Activated naive CD4-positive, alpha-beta T cell treated with anti-CD3 and anti-CD28 coated beads for 36 hours (primary cell): ENCODE measurements at regions of chr16 and their contacts with region 1.

Region 1: DNA sequence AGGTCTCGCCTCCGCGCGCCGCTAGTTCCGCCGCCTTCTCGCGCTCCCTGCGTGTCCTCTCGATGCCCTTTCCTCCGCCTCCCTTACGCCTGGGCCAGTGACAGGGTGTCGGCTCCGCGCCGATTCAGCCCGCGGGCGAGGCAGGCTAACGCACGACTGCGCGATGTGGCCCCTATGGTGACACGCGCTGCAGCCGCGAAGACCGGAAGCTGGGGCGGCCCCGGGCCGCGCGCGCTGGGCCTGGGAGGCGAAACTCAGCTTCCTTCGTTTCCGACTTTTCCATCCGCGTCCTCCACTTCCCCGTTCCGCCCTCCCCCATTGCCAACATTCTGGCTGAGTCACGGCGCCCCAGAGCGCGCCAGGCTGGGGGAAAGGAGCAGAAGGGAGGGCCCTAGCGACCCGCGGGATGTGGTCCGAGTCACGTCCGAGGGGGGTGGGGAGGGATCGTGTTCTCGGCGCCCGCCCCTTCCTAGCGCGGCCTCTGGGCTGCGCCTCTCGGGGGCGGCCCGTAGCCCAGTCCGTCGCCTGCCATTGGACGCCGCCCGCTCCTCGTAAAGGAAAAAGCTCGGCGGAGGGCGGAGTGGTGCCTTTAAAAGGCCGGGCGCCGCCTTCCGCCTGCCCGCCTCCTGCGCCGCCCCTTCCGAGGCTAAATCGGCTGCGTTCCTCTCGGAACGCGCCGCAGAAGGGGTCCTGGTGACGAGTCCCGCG is at the start of gene ALDOA:
- DNase-seq: peak; percentile 97
- H3K4me3 Mint-ChIP-seq: peak within 1 kb of the TSS; percentile 95
- H3K27ac Mint-ChIP-seq: peak within 1 kb of the TSS; percentile 98
- H3K4me1 Mint-ChIP-seq: peaks cover 32% of the 10 kb centered on the region
- H3K27me3 Mint-ChIP-seq: no peaks in the 10 kb centered on the region
- total RNA-seq, gene ALDOA: 1,750 to 1,795 TPM

Region 2: DNA sequence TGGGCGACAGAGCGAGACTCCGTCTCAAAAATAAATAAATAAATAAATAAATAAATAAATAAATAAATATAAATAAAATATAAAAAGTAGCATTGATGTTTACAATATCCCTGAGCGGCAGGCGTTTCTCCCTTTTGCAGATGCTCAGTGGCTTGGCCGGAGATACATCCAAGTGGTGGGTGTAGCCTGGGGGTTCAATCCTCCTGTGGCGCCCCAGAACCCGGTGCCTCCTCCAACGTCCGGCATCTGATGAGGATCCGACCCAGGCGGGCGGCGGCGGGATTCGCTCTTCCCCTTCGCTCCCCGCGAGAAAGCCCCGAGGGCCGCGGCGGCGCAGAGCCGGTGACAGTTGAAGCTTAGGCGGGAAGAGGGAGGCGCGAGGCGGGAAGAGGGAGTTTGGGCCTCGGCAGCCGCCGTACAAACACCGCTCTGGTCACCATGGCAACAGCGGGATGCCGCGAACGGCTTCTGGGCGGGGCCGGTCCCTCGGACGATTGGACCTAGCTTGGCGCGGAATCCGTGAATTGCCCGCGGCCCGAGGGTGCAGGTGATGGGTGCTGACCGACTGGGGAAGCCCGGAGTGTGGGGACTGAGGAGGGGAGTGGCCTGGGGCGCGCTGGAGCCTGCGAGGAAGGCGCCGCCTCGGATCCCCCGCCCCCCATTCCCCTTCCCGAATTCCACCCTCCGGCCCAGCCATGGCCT is 12.5 kb before region 1 on chr16:
- CTCF ChIA-PET with region 1: interaction called, 10 read pairs
- intact Hi-C with region 1: loop called (anchors 1 kb)
- DNase-seq: peak; percentile 95
- H3K4me3 Mint-ChIP-seq: peak overlapping the region; percentile 87
- H3K27ac Mint-ChIP-seq: peak overlapping the region; percentile 48
- H3K4me1 Mint-ChIP-seq: peaks cover 20% of the 10 kb centered on the region
- H3K27me3 Mint-ChIP-seq: no peaks in the 10 kb centered on the region

Region 3: GRCh38 chr16:30122604-30123160 is 57.4 kb after region 1 on chr16:
- CTCF ChIA-PET with region 1: no interaction called
- intact Hi-C with region 1: loop called (anchors 1 kb)
- DNase-seq: no peak
- H3K4me3 Mint-ChIP-seq: peak overlapping the region; percentile 88
- H3K27ac Mint-ChIP-seq: peak overlapping the region; percentile 85
- H3K4me1 Mint-ChIP-seq: peaks cover 30% of the 10 kb centered on the region
- H3K27me3 Mint-ChIP-seq: no peaks in the 10 kb centered on the region

Region 4: GRCh38 chr16:30378236-30379204 is 313.2 kb after region 1 on chr16:
- CTCF ChIA-PET with region 1: no interaction called
- intact Hi-C with region 1: loop called (anchors 2 kb)
- DNase-seq: peak; percentile 100
- H3K4me3 Mint-ChIP-seq: peak overlapping the region; percentile 99
- H3K27ac Mint-ChIP-seq: peak overlapping the region; percentile 99
- H3K4me1 Mint-ChIP-seq: peaks cover 43% of the 10 kb centered on the region
- H3K27me3 Mint-ChIP-seq: no peaks in the 10 kb centered on the region